Activated B cell treated with CpG ODN at 0.5 μM for 24 hours (primary cell): ENCODE measurements at regions of chr2 and their contacts with region 1.

Region 1: DNA sequence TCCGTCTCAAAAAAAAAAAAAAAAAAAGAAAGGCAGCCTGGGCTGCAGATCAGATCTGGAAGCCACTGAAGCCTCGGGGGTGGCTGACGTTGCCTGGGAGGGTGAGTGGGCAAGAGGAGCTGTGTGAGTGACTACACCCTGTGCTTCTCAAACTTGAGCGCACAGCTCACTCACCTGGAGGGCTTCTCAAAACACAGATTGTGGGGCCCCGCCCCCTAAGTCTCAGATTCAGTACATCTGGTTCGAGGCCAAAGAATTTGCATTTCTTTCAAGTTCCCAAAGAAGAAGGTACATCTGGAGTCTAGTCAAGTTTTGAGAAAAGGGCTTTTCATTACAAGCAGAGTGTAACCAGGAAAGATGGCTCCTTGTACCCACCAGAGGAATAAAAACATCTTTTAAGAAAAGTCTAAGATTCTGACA is 97.7 kb upstream of the CAB39 start:
- DNase-seq: peak; percentile 46
- ATAC-seq: peak; percentile 80
- H3K4me3 Mint-ChIP-seq: peak overlapping the region; percentile 64
- H3K27ac Mint-ChIP-seq: peak overlapping the region; percentile 71
- H3K4me1 Mint-ChIP-seq: peaks cover 51% of the 10 kb centered on the region
- H3K27me3 Mint-ChIP-seq: no peaks in the 10 kb centered on the region
- CTCF ChIP-seq: no peak

Region 2: DNA sequence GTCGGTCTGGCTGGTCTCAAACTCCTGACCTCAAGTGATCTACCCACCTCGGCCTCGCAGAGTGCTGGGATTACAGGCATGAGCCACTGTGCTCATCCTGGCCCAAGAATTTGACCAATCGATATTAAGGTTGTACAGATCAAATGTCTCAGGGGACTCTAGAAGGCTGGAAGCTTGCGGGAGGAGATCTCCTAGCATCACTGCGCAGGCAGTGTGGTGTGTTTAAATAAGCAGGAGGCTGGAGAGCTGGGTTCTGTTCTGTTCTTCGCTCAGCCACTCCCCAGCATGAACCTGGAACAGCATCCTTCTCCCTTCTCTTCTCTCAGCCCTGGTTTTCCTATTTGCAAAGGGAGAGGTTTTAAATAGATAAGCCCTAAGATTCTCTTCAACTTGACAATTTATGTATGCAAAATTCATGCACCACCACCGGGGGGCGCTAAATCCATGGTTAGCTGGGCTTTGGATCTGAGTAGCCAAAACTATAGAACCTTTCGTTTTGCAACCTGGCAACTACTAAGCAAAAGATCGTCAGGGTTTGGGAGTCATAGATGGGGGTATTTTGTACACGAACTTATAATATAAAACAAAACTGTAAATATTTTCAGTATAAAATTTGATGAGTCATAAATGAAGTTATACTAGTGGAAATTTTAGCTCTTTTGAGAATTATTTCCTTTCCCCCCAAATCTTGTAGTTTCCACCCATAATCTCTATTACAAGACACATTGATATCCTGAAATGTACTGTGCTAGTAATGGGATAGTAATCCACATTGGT is 606.8 kb before region 1 on chr2:
- CTCF ChIA-PET with region 1: interaction called, 5 read pairs
- POLR2A ChIA-PET with region 1: no interaction called
- intact Hi-C with region 1: loop called (anchors 1 kb)
- DNase-seq: peak; percentile 63
- ATAC-seq: peak; percentile 75
- H3K4me3 Mint-ChIP-seq: no peak overlapping the region
- H3K27ac Mint-ChIP-seq: no peak overlapping the region
- H3K4me1 Mint-ChIP-seq: peaks cover 3% of the 10 kb centered on the region
- H3K27me3 Mint-ChIP-seq: no peaks in the 10 kb centered on the region
- CTCF ChIP-seq: peak; percentile 54

Region 3: DNA sequence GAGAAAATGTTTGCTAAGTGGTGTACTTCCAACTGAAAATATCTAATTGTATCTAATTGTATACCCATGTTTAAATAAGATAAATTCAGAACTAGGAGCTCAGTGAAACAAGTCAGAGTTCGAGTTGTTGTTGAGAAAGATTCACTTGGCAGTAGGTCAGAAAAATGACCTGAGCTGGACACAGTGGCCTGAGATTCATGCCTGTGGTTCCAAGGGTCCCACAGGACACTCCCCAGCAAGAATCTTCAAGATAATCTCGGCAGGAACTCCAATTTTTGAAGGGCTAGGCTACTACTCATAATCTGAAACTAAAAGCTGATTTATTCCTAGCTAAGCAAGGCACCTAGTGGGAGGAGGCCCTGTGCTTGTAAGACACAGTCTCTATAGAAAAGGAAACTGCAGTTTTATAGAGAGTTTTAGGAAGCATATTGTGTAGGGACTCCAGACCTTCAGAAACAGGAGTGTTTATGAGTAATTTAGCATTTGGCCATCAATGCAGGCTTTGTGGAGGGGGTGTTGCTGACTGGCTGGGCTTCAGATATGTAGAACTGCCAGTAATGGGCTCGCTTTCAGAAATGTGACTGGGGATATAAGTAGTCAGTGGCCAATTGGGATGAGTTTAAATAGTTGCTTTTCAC is 346.2 kb before region 1 on chr2:
- CTCF ChIA-PET with region 1: no interaction called
- POLR2A ChIA-PET with region 1: no interaction called
- intact Hi-C with region 1: loop called (anchors 1 kb)
- DNase-seq: no peak
- ATAC-seq: no peak
- H3K4me3 Mint-ChIP-seq: peak overlapping the region; percentile 60
- H3K27ac Mint-ChIP-seq: peak overlapping the region; percentile 92
- H3K4me1 Mint-ChIP-seq: peaks cover 81% of the 10 kb centered on the region
- H3K27me3 Mint-ChIP-seq: no peaks in the 10 kb centered on the region
- CTCF ChIP-seq: no peak

Region 4: GRCh38 chr2:230472621-230473018 is 142.3 kb before region 1 on chr2:
- CTCF ChIA-PET with region 1: interaction called, 6 read pairs
- POLR2A ChIA-PET with region 1: interaction called, 8 read pairs
- intact Hi-C with region 1: loop called (anchors 1 kb)
- DNase-seq: no peak
- ATAC-seq: peak; percentile 75
- H3K4me3 Mint-ChIP-seq: peak overlapping the region; percentile 17
- H3K27ac Mint-ChIP-seq: peak overlapping the region; percentile 89
- H3K4me1 Mint-ChIP-seq: peaks cover 56% of the 10 kb centered on the region
- H3K27me3 Mint-ChIP-seq: no peaks in the 10 kb centered on the region
- CTCF ChIP-seq: no peak

Region 5: GRCh38 chr2:230582851-230583283 is 32.1 kb before region 1 on chr2:
- CTCF ChIA-PET with region 1: no interaction called
- POLR2A ChIA-PET with region 1: interaction called, 6 read pairs
- intact Hi-C with region 1: loop called (anchors 1 kb)
- DNase-seq: no peak
- ATAC-seq: peak; percentile 81
- H3K4me3 Mint-ChIP-seq: peak overlapping the region; percentile 42
- H3K27ac Mint-ChIP-seq: peak overlapping the region; percentile 92
- H3K4me1 Mint-ChIP-seq: peaks cover 53% of the 10 kb centered on the region
- H3K27me3 Mint-ChIP-seq: no peaks in the 10 kb centered on the region
- CTCF ChIP-seq: no peak

Region 6: GRCh38 chr2:230668184-230668938 is 53.4 kb after region 1 on chr2:
- CTCF ChIA-PET with region 1: no interaction called
- POLR2A ChIA-PET with region 1: interaction called, 10 read pairs
- intact Hi-C with region 1: loop called (anchors 1 kb)
- DNase-seq: no peak
- ATAC-seq: peak; percentile 43
- H3K4me3 Mint-ChIP-seq: peak overlapping the region; percentile 29
- H3K27ac Mint-ChIP-seq: peak overlapping the region; percentile 67
- H3K4me1 Mint-ChIP-seq: peaks cover 59% of the 10 kb centered on the region
- H3K27me3 Mint-ChIP-seq: no peaks in the 10 kb centered on the region
- CTCF ChIP-seq: no peak

Region 7: GRCh38 chr2:230864598-230865306 is 249.8 kb after region 1 on chr2 and contains the start of gene ITM2C:
- CTCF ChIA-PET with region 1: no interaction called
- POLR2A ChIA-PET with region 1: no interaction called
- intact Hi-C with region 1: no loop called
- DNase-seq: peak; percentile 73
- ATAC-seq: peak; percentile 83
- H3K4me3 Mint-ChIP-seq: peak within 1 kb of the TSS; percentile 89
- H3K27ac Mint-ChIP-seq: peak within 1 kb of the TSS; percentile 70
- H3K4me1 Mint-ChIP-seq: peaks cover 57% of the 10 kb centered on the region
- H3K27me3 Mint-ChIP-seq: peaks cover 2% of the 10 kb centered on the region
- CTCF ChIP-seq: no peak
- total RNA-seq, gene ITM2C: 102 and 117 TPM in 2 replicates

Region 8: DNA sequence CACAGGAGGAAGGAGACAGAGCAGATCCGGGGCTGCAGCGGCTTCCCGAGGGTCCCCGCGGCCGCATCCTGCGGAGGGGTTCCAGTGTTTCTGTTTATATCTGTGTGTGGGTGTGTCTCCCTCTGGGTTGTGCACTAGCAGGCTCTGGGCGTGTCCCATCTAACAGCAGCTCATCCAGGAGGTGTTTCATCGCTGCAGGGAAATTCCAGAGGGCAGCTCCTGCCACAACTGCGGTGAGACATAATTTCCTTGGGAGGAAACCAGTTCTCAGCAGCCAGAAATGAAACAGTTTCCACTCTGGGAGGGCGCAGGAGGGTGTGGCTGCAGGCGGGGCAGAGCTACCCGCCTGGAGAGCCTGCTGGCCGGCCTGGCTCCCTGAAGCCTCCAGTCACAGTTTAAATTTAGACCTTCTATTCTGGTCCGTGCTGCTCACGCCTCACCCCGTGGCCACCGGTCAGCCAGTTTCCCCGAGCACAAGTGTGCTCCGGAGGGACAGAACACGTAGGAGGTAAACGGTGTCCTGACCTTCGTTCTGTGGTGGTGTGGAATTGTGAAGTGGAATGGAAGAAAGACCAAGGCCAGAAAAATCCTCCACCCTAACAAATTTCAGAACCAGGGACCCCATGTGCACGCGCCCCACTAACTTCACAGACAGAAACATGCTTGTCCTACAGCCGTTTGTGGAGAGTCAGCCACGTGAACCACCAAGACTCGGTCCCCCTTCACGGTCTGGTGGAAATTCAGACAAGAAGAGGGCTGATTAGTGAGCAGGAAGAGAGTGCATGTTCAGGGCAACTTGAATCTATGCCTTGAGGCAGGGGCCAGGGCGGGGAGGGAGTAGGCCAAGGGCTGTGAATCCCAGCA is 1027.9 kb after region 1 on chr2:
- CTCF ChIA-PET with region 1: no interaction called
- POLR2A ChIA-PET with region 1: no interaction called
- intact Hi-C with region 1: no loop called
- DNase-seq: peak; percentile 39
- ATAC-seq: peak; percentile 80
- H3K4me3 Mint-ChIP-seq: peak overlapping the region; percentile 80
- H3K27ac Mint-ChIP-seq: peak overlapping the region; percentile 66
- H3K4me1 Mint-ChIP-seq: peaks cover 16% of the 10 kb centered on the region
- H3K27me3 Mint-ChIP-seq: no peaks in the 10 kb centered on the region
- CTCF ChIP-seq: no peak